PC-9 (cell line): ENCODE measurements at regions of chr6 and their contacts with region 1.

Region 1: DNA sequence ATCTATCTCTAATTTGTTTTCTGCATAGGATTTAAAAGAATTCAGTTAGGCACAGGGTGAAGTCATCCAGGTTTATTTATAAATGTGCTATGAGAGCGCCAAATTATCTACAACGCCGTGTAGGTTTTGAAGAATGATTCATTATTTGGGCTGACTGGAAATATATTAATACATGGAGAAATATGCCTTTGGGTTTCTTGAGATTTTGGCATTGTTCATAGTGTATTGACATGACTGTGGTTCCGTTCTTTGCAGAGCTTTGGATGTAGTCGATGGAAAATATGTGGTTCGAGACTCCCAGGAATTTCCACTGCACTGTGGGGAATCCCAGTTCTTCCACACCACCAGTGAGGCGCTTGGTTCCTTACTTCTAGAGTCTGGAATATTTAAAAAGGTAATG is 90.9 kb downstream of the CRYBG1 start:
- DNase-seq: no peak
- H3K4me3 ChIP-seq: no peak overlapping the region
- H3K27ac ChIP-seq: no peak overlapping the region
- H3K4me1 ChIP-seq: peaks cover 10% of the 10 kb centered on the region; the same call in 1 of the 2 replicates
- H3K27me3 ChIP-seq: no peaks in the 10 kb centered on the region
- CTCF ChIP-seq: no peak

Region 2: GRCh38 chr6:106347341-106347740 is 104.1 kb before region 1 on chr6:
- CTCF ChIA-PET with region 1: interaction called, 10 read pairs
- POLR2A ChIA-PET with region 1: no interaction called
- intact Hi-C with region 1: no loop called
- DNase-seq: no peak
- H3K4me3 ChIP-seq: no peak overlapping the region
- H3K27ac ChIP-seq: no peak overlapping the region
- H3K4me1 ChIP-seq: 0 out of 2 replicates have a peak, but pooled peaks cover 5% of the 10 kb centered on the region
- H3K27me3 ChIP-seq: no peaks in the 10 kb centered on the region
- CTCF ChIP-seq: no peak

Region 3: DNA sequence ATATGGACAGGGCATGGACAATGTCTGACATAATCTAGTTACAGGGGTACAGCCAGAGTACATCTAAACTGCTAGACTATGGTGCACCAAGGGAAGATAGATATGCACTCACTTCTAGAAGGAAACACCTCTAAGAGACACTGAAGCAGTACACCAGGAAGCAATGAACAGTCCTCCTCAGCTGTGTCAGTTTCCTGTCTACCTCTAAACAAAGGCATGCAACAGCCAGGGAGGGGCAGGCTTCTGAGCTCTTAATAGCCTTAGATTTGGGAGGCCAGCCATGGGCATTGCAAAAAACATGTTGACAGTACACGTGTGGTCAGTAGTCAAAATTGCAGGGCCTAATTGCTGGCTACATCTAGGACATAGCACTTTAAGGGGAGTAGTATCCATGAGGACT is 69.6 kb before region 1 on chr6:
- CTCF ChIA-PET with region 1: no interaction called
- POLR2A ChIA-PET with region 1: no interaction called
- intact Hi-C with region 1: no loop called
- DNase-seq: peak; percentile 39 to 58
- H3K4me3 ChIP-seq: no peak overlapping the region
- H3K27ac ChIP-seq: peak overlapping the region; percentile 42
- H3K4me1 ChIP-seq: peaks cover 28% of the 10 kb centered on the region
- H3K27me3 ChIP-seq: no peaks in the 10 kb centered on the region
- CTCF ChIP-seq: no peak

Region 4: DNA sequence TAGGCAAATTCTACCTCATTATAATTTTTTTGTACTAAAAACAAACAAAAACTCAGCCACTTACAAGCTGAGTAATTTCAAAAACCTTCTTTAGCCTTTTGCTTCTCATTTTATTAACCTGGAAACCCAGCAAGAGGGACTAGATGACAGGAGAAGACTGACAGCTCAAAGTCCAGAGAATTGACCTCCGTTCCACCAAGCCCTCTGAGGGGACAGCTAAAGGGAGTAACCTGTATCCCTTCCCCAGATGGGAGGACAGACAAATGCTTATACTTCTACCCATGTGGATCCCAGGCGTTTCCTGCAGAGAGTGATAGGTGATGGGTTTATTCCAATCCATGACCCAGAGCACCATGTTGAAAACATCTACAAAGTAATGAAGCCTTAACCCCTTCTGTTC is 558.1 kb after region 1 on chr6:
- CTCF ChIA-PET with region 1: no interaction called
- POLR2A ChIA-PET with region 1: no interaction called
- intact Hi-C with region 1: no loop called
- DNase-seq: no peak
- H3K4me3 ChIP-seq: no peak overlapping the region
- H3K27ac ChIP-seq: no peak overlapping the region
- H3K4me1 ChIP-seq: no peaks in the 10 kb centered on the region
- H3K27me3 ChIP-seq: no peaks in the 10 kb centered on the region
- CTCF ChIP-seq: no peak